PC-9 (cell line): ENCODE measurements at regions of chr12 and their contacts with region 1.

Region 1: DNA sequence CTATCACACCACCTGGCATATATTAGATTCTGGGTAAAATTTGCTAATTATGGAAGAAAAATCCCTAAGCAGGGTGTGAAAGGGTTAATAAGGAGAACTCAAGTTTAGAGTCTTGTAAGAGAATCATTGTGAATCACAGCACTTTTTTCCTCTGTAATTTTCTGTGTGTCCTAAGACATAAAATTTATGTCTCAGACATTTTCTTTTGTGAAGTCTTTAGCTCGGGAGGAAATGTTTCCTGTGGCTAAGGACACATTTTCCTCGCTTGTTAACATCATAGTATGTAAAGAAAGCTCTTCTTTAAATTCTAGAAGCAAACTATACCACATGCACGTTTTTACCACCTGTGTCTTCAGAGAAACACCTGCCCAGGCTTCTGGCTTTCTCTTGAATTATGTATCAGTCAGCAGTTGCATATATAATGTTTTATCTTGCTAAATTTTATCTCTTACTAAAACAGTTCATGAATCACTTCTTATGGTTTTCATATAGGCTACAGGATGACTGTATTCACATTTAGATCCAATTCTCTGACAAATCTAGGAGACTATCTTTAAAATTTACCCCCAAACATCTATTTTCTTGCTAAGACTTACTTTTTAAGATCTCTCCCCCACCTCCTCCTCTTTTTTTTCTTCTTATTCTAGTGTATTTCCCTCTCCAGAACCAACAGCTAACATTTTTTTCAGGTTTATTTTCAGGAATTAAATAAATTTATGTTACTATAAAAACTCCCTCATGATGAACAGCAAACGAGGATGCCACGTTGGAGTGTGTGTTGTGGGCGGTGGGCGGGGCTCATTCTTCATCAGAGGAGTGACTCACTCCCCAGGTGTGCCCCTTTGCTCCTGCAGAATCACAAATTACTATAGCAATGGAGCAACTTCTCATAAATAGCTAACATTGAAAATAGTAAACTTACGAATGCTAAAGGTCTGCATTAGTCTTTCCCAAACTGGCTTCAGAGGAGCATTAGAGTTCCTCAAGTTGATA is 11.6 kb upstream of the CSRP2 start:
- DNase-seq: peak in 1 of 2 experiments; percentile 16
- H3K4me3 ChIP-seq: no peak overlapping the region
- H3K27ac ChIP-seq: no peak overlapping the region
- H3K4me1 ChIP-seq: no peaks in the 10 kb centered on the region
- H3K27me3 ChIP-seq: no peaks in the 10 kb centered on the region
- CTCF ChIP-seq: no peak

Region 2: DNA sequence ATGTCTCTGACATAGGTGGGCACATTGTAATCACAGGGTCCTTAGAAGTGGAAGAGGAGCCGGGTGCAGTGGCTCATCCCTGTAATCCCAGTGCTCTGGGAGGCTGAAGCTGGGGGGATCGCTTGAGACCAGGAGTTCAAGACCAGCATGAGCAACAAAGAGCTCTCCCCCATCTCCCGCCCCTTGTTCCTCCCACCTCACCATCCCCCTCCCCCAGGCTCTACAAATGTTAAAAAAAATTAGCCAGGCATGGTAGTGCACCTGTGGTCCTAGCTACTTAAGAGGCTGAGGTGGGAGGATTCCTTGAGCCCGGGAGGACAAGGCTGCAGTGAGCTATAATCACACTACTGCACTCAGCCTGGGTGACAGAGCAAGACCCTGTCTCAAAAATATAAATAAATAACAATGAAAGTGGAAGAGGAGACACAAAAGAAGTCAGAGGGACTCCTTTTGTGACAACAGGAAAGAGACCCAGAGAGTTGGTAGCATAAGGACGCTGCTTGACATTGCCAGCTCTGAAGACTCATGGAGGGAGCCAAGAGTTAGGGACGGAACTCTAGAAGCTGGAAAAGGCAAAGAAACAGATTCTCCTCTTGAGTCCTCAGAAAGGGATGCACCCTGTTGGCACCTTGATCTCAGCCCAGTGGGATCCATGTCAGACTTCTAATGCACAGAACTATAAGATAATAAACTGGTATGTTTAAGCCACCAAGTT is 18.0 kb after region 1 on chr12:
- CTCF ChIA-PET with region 1: no interaction called
- POLR2A ChIA-PET with region 1: interaction called, 17 read pairs
- intact Hi-C with region 1: no loop called
- DNase-seq: no peak
- H3K4me3 ChIP-seq: no peak overlapping the region
- H3K27ac ChIP-seq: no peak overlapping the region
- H3K4me1 ChIP-seq: no peaks in the 10 kb centered on the region
- H3K27me3 ChIP-seq: no peaks in the 10 kb centered on the region
- CTCF ChIP-seq: no peak

Region 3: DNA sequence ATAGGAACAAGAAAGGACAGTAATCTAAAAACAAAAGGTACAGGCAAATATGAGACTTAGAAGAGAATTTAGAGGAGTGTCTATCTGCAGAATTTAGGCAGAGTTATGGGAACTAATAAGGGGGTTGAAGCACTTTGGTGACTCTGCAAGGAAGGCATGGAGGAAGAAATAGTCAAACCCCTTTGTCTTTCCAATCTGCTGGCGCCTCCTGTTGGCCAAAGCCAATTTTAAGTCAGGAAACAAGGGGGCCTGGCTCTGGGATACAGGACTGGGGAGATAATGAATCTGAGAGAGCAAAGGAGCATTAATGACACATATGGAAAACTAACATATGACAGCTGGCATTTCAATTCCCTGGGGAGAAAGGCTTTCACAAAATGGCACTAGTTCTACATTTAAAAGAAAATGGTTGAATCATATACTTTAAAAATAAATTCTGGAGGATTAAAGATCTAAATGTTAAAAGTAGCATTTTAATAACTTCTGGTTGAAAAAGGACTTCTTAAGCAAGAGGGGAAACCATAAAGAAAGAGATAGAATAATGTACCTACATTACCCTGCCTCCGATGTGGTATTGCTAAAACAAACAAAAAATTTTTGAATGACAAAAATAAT is 36.8 kb after region 1 on chr12:
- CTCF ChIA-PET with region 1: no interaction called
- POLR2A ChIA-PET with region 1: no interaction called
- intact Hi-C with region 1: no loop called
- DNase-seq: no peak
- H3K4me3 ChIP-seq: no peak overlapping the region
- H3K27ac ChIP-seq: no peak overlapping the region
- H3K4me1 ChIP-seq: no peaks in the 10 kb centered on the region
- H3K27me3 ChIP-seq: no peaks in the 10 kb centered on the region
- CTCF ChIP-seq: peak; percentile 39; the same call in 1 of the 2 replicates